Activated B cell treated with CpG ODN at 0.5 μM for 24 hours (primary cell): ENCODE measurements at regions of chr19 and their contacts with region 1.

Region 1: GRCh38 chr19:12580163-12580694 is 28.9 kb upstream of the ZNF564 start:
- DNase-seq: no peak
- ATAC-seq: no peak
- H3K4me3 Mint-ChIP-seq: no peak overlapping the region
- H3K27ac Mint-ChIP-seq: no peak overlapping the region
- H3K4me1 Mint-ChIP-seq: peaks cover 10% of the 10 kb centered on the region
- H3K27me3 Mint-ChIP-seq: no peaks in the 10 kb centered on the region
- CTCF ChIP-seq: no peak

Region 2: GRCh38 chr19:11482384-11483050 is 1097.7 kb before region 1 on chr19:
- CTCF ChIA-PET with region 1: no interaction called
- POLR2A ChIA-PET with region 1: interaction called, 12 read pairs
- intact Hi-C with region 1: no loop called
- DNase-seq: peak; percentile 85
- ATAC-seq: peak; percentile 72
- H3K4me3 Mint-ChIP-seq: peak overlapping the region; percentile 74
- H3K27ac Mint-ChIP-seq: peak overlapping the region; percentile 41
- H3K4me1 Mint-ChIP-seq: peaks cover 30% of the 10 kb centered on the region
- H3K27me3 Mint-ChIP-seq: peaks cover 23% of the 10 kb centered on the region
- CTCF ChIP-seq: no peak

Region 3: DNA sequence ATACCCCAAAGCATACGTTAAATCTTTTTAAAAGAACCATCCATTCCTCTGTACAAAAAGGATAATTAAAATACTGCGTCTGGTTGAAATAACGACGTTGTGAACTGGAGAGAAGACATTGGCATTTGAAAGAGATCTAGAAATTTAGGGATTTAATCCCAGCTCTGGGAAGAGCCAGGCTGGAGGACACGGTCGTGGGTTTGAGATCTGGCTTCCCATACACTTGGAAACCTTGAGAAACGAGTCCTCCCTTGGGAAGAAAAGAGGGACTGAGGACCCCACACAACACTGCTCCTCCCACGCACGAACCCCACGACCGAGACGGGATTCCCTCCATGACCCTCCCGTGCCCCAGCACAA is 96.2 kb before region 1 on chr19:
- CTCF ChIA-PET with region 1: no interaction called
- POLR2A ChIA-PET with region 1: no interaction called
- intact Hi-C with region 1: no loop called
- DNase-seq: no peak
- ATAC-seq: no peak
- H3K4me3 Mint-ChIP-seq: peak overlapping the region; percentile 96
- H3K27ac Mint-ChIP-seq: peak overlapping the region; percentile 35
- H3K4me1 Mint-ChIP-seq: peaks cover 35% of the 10 kb centered on the region
- H3K27me3 Mint-ChIP-seq: no peaks in the 10 kb centered on the region
- CTCF ChIP-seq: no peak

Region 4: GRCh38 chr19:12639901-12640613 is 59.8 kb after region 1 on chr19:
- CTCF ChIA-PET with region 1: no interaction called
- POLR2A ChIA-PET with region 1: no interaction called
- intact Hi-C with region 1: no loop called
- DNase-seq: peak; percentile 75
- ATAC-seq: peak; percentile 95
- H3K4me3 Mint-ChIP-seq: peak overlapping the region; percentile 79
- H3K27ac Mint-ChIP-seq: peak overlapping the region; percentile 46
- H3K4me1 Mint-ChIP-seq: peaks cover 23% of the 10 kb centered on the region
- H3K27me3 Mint-ChIP-seq: no peaks in the 10 kb centered on the region
- CTCF ChIP-seq: no peak